ENCODE measurements at regions of chr15 and their contacts with region 1.

Region 1: GRCh38 chr15:80567721-80568157 is 127.4 kb upstream of the ABHD17C start:
- DNase-seq: peak; percentile 88
- H3K4me3 ChIP-seq: no peak overlapping the region
- H3K27ac ChIP-seq: no peak overlapping the region
- H3K4me1 ChIP-seq: peaks cover 3% of the 10 kb centered on the region
- H3K27me3 ChIP-seq: peaks cover 0 to 4% of the 10 kb centered on the region in 2 experiments
- CTCF ChIP-seq: peak; percentile 77 to 78
- POLR2A ChIP-seq: no peak

Region 2: DNA sequence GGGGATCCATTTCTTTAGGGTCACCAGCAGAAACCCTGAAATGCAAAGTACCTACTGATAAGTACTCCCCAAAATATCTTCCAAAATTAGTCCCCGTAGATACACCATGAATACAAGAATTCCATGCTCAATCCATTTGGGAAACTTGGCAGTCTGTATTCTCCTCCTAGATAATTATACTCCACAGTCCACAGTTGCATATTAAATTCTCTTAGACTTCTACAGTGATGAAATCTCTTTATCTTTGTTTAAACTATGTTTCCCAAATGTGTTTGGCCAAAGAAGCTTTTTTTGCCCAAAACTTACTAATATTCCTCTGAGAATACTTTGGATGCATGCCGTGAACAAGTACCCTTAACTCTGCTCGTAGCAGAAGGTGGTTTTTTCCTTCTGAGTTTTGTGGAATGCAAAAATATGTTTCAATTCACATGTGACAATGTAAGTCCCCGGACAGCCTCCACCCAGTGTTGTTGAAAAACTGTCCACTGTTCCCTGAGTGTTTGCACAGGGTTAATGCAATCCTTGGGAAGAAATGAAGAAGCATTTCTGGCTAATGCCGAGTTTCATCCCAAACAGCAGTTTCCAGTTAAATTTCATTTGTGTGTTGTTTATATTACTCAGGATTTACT is 36.9 kb before region 1 on chr15:
- CTCF ChIA-PET with region 1: no interaction called
- POLR2A ChIA-PET with region 1: no interaction called
- dilution Hi-C with region 1: no loop called
- intact Hi-C with region 1: no loop called
- DNase-seq: no peak
- H3K4me3 ChIP-seq: no peak overlapping the region
- H3K27ac ChIP-seq: no peak overlapping the region
- H3K4me1 ChIP-seq: no peaks in the 10 kb centered on the region
- H3K27me3 ChIP-seq: peaks cover 0 to 6% of the 10 kb centered on the region in 2 experiments
- CTCF ChIP-seq: no peak
- POLR2A ChIP-seq: no peak

Region 3: DNA sequence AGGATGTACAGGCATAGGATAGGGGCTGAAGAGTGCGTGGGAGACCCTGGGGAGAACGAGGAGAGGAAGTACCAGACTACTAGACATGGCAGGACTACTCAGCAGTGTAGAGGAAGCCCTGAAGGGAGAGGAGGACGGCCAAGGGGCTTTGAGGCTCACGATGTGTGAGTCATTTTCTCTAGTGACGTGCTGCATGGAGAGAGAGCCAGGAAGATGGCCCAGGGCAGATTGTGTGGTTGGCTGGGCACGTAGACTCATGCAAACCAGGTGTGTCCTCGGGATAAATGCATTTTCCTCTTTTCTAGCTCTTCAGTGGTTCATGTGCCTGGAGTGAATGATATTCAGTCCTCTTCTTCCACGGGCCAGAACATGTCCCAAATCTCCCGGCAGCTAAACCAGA is 12.4 kb after region 1 on chr15:
- CTCF ChIA-PET with region 1: interaction called, 49 read pairs
- POLR2A ChIA-PET with region 1: no interaction called
- dilution Hi-C with region 1: no loop called
- intact Hi-C with region 1: no loop called
- DNase-seq: no peak
- H3K4me3 ChIP-seq: no peak overlapping the region
- H3K27ac ChIP-seq: no peak overlapping the region
- H3K4me1 ChIP-seq: no peaks in the 10 kb centered on the region
- H3K27me3 ChIP-seq: no peaks in the 10 kb centered on the region
- CTCF ChIP-seq: no peak
- POLR2A ChIP-seq: no peak

Region 4: GRCh38 chr15:80619680-80620079 is 51.9 kb after region 1 on chr15:
- CTCF ChIA-PET with region 1: interaction called, 45 read pairs
- POLR2A ChIA-PET with region 1: no interaction called
- dilution Hi-C with region 1: no loop called
- intact Hi-C with region 1: loop called (anchors 1 kb)
- DNase-seq: no peak
- H3K4me3 ChIP-seq: no peak overlapping the region
- H3K27ac ChIP-seq: no peak overlapping the region
- H3K4me1 ChIP-seq: peaks cover 19% of the 10 kb centered on the region
- H3K27me3 ChIP-seq: no peaks in the 10 kb centered on the region
- CTCF ChIP-seq: no peak
- POLR2A ChIP-seq: no peak

Region 5: GRCh38 chr15:80695104-80695910 is 127.6 kb after region 1 on chr15 and contains the start of gene ABHD17C:
- CTCF ChIA-PET with region 1: interaction called, 131 read pairs
- POLR2A ChIA-PET with region 1: interaction called, 3 read pairs
- dilution Hi-C with region 1: loop called (anchors 25 kb)
- intact Hi-C with region 1: loop called (anchors 1 kb)
- DNase-seq: peak; percentile 51
- H3K4me3 ChIP-seq: peak within 1 kb of the TSS; percentile 80 to 96 (median 85)
- H3K27ac ChIP-seq: peak within 1 kb of the TSS; percentile 60
- H3K4me1 ChIP-seq: peaks cover 16% of the 10 kb centered on the region
- H3K27me3 ChIP-seq: no peaks in the 10 kb centered on the region
- CTCF ChIP-seq: no peak
- POLR2A ChIP-seq: peak; percentile 64
- total RNA-seq, gene ABHD17C: 8.2 and 10.9 TPM in 2 replicates

Region 6: DNA sequence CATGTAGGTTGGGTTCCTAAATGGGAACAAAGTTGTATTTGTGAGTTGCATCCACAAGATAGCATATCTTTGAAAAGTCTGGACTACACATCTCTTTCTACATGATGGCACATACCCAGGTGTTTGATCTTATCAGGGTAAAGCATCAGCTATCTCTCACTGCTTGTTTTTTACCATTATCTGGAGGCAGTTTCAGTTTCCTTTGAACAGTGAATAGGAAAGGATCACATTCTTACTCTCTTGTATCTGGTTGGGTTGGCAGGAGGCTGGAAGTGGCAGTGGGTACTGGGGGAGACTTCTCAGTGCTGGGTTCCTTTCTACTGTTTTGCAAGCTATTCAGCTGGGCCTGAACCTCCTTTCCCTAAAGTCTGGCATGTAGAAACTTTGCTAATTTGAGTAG is 215.5 kb after region 1 on chr15:
- CTCF ChIA-PET with region 1: interaction called, 828 read pairs
- POLR2A ChIA-PET with region 1: no interaction called
- dilution Hi-C with region 1: no loop called
- intact Hi-C with region 1: no loop called
- DNase-seq: no peak
- H3K4me3 ChIP-seq: no peak overlapping the region
- H3K27ac ChIP-seq: no peak overlapping the region
- H3K4me1 ChIP-seq: peaks cover 12% of the 10 kb centered on the region
- H3K27me3 ChIP-seq: peaks cover 17 to 23% of the 10 kb centered on the region in 2 experiments
- CTCF ChIP-seq: no peak
- POLR2A ChIP-seq: no peak

Measured in endothelial cell of umbilical vein (primary cell).